Common myeloid progenitor, CD34-positive (primary cell): ENCODE measurements at regions of chr5 and their contacts with region 1.

Region 1: DNA sequence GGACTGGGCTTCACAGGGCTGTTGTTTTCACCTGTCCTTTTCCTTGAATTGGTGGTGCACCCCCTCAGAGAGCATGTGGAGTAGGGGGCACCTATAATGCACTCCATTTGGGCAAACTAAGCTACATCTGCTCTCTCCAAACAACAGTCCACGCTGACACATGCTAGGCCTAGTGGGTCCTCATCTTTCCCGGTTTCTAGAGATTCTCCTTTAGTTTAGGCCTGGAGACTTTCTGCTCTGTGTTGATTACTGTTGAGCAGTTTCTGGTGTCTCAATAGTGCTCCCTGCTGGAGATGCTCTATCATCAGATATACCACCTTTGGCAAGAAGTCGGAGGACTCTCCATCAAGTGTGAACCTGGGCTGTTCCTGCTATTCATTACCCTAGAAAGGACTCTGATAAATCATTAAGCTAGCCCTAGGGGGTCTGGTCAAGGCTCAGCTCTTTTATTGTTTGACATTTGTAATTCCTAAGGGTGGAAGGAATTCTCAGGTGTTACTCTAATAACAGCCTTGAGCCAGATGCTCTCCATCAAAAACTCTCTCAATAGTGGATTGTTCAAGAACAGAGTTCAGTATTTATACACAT is 64.0 kb upstream of the FYB1 start:
- DNase-seq: peak; percentile 79 to 88 (median 80)
- H3K4me3 ChIP-seq: no peak overlapping the region
- H3K27ac ChIP-seq: no peak overlapping the region
- H3K4me1 ChIP-seq: no peaks in the 10 kb centered on the region
- H3K27me3 ChIP-seq: no peaks in the 10 kb centered on the region

Region 2: DNA sequence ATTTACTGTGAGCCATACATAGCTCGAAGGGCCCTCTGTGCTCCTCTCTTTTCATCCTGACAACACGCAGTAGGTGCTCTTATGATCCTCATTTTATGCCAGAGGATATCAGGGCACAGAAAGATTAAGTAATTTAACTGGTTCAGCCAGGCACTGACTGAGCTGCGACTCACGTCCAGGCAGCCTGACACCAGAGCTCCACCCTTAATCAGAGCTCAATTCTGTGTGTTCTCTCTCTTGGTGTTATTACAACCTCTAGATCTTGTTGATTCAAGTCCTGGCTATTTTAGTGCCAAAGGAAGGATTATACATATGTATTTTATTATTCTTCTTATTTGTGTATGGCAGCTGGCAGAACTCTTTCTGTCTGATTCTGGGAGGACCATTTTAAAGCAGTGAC is 377.8 kb before region 1 on chr5:
- CTCF ChIA-PET with region 1: no interaction called
- POLR2A ChIA-PET with region 1: no interaction called
- DNase-seq: no peak
- H3K4me3 ChIP-seq: no peak overlapping the region
- H3K27ac ChIP-seq: no peak overlapping the region
- H3K4me1 ChIP-seq: no peaks in the 10 kb centered on the region
- H3K27me3 ChIP-seq: peaks cover 0 to 11% (median 2%) of the 10 kb centered on the region in 5 experiments

Region 3: DNA sequence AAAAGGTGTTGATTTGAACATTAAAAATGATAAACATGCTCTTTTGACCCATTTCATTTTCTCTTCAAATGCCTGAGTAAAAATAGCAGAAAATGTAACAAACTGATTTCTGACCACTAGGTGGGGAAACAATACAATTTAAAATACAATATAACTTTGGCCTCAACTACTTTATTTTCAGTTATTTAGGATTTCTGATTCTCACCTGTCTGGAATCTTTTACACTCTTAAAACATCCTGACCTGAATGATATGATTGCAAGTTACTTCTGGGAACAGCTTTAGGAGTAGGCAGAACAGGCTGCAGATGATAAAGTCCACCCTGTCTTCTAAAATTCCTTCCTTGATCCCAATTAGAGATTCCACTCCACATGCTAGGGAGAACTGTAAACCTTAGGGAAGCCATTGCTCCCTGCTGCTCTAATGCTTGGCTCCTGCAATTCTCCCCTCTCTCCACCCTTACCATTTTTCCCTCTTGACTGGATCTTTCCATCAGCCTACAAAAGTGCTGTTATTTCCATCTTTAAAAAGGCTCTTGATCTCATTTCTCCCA is 134.3 kb before region 1 on chr5:
- CTCF ChIA-PET with region 1: interaction called, 11 read pairs
- POLR2A ChIA-PET with region 1: no interaction called
- DNase-seq: peak; percentile 35 to 53 (median 43)
- H3K4me3 ChIP-seq: no peak overlapping the region
- H3K27ac ChIP-seq: no peak overlapping the region
- H3K4me1 ChIP-seq: peaks cover 0 to 20% (median 2%) of the 10 kb centered on the region in 4 experiments
- H3K27me3 ChIP-seq: no peaks in the 10 kb centered on the region

Region 4: DNA sequence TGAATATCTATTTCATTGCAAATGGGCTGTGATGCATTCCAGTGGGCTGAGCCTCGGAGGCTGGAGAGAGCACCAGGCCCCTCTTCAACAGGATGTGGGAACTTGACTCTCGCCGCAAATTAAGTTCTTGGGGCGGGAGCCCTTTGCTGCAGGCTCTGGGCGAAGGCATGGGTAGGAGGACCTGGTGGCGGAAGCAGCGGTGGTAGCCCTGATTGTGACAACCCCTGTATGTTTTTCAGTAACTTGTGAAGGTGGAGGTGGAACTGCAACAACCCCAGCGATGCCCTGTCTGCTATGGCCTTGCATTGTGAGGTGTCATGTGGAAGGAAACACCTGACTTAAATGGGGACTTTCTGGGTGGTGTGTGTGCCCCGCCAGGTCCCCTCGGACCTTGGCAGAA is 73.4 kb before region 1 on chr5:
- CTCF ChIA-PET with region 1: interaction called, 14 read pairs
- POLR2A ChIA-PET with region 1: no interaction called
- DNase-seq: peak; percentile 49 to 82 (median 82)
- H3K4me3 ChIP-seq: peak overlapping the region in 6 of 7 experiments; percentile 3 to 44 (median 14)
- H3K27ac ChIP-seq: no peak overlapping the region
- H3K4me1 ChIP-seq: peaks cover 20 to 56% (median 26%) of the 10 kb centered on the region in 4 experiments
- H3K27me3 ChIP-seq: no peaks in the 10 kb centered on the region

Region 5: GRCh38 chr5:39224196-39224761 is 59.0 kb before region 1 on chr5:
- CTCF ChIA-PET with region 1: interaction called, 90 read pairs
- POLR2A ChIA-PET with region 1: no interaction called
- DNase-seq: peak in 2 of 3 donors; percentile 36 to 47
- H3K4me3 ChIP-seq: no peak overlapping the region
- H3K27ac ChIP-seq: no peak overlapping the region
- H3K4me1 ChIP-seq: peaks cover 7 to 41% (median 11%) of the 10 kb centered on the region in 4 experiments
- H3K27me3 ChIP-seq: no peaks in the 10 kb centered on the region